ENCODE measurements at regions of chr7 and their contacts with region 1.

Region 1: DNA sequence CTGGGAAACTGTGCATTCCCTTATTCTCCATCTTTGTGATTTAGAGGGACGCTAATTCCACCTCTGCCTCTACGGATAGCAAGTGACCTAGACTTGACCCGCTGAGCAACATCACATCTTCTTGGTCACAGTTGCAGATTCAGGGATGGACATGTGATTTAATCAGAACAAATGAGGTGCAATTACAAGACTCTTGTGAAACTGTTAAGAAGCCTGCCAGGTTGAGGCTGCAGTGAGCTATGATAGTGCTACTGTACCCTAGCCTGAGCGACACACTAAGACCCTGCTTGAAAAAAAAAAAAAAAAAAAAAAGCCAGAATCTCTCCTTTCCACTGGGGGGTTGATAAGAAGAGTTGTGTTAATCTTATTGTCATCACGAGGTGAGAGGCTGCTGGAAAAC is 14.4 kb downstream of the MPLKIP start:
- DNase-seq: no peak
- H3K4me3 Mint-ChIP-seq: no peak overlapping the region
- H3K27ac Mint-ChIP-seq: no peak overlapping the region
- H3K4me1 Mint-ChIP-seq: peaks cover 48% of the 10 kb centered on the region
- H3K27me3 Mint-ChIP-seq: no peaks in the 10 kb centered on the region
- CTCF ChIP-seq: no peak

Region 2: DNA sequence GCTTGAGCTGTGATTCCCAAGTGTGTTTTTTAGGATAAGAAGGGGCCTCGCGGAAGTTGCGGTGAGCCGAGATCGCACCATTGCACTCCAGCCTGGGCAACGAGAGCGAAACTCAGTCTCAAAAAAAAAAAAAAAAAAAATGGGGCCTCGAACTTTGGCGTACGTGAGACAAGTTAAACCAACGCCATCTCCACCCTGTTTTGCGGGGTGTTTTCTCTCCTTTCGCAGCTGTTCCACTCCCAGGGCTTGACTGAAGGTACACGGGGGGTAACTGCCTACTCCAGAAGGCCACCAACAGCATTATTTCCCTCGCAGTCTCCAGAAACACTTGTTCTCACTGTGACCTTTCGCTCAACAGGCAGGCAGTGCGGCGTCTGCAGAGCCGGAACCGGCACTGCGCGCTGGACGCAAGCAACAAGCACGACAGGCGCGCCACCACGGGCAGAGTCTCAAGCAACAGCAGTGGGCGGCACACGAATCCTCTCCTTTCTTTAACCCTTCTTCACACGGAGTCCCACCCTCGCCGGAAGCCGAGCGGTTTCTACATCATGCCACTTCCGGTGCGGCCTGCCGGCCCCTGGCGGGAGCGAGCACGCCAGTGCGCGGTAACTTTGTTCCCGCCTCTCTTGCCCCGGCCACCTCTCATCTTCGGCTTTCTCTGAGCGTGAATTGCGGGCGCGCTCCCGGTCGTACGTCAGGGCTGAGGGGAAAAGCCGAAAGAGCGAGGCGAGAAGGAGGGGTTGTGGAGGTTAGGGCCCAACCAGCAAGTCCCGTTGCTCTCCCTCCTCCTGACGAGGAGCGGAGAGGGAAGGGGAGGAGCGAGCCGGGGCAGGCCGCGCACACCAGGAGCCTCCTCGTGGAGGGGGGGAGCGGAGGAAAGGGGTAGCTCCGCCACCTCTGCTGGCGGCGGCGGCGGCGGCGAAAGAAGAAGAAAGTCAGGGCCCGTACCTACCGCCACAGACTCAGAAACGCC is 170.8 kb before region 1 on chr7:
- CTCF ChIA-PET with region 1: interaction called, 11 read pairs
- intact Hi-C with region 1: no loop called
- DNase-seq: peak; percentile 99
- H3K4me3 Mint-ChIP-seq: peak overlapping the region; percentile 87
- H3K27ac Mint-ChIP-seq: peak overlapping the region; percentile 84
- H3K4me1 Mint-ChIP-seq: peaks cover 11% of the 10 kb centered on the region
- H3K27me3 Mint-ChIP-seq: no peaks in the 10 kb centered on the region
- CTCF ChIP-seq: peak; percentile 21